ENCODE measurements at regions of chrX and their contacts with region 1.

Region 1: DNA sequence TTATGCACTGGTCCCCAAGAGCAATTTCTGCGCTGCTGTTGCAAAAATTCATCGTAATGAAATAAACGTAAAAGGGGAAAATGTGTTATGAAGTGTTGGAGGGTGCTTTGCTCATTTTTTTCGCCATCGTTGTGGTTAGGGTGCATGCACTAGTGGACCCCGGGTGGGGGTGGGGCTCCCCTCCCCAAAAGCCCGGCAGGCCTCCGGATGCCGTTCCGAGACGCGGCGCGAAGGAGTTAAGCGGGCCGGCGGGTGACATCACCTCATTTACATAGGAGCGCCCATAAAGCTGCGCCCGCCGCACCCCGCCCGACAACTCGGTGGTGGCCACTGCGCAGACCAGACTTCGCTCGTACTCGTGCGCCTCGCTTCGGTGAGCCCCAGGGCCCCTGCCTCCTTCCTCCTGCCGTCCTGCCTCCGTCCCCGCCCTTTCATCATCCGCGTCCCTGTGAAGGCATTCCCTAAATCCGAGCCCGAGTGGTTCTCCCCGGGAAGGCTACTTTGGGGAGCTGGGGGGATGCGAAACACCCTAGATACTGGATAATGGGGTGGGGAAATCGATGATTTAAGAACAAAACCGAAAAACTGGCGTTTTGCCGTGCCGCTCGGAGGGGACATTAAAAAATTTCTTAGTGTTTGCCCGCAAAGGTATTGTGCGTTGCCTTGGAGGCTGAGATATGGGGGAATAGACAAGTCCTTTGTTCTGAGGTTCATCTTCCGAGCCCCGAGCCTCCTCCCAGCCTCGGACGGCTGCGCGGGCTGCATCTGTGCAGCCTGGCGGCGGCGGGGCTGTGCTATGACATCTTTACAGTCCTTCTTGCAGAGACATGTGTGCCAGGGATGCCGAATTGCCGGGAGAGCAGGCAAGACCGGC is at the start of gene TMSB4X:
- DNase-seq: peak; percentile 87
- ATAC-seq: peak; percentile 48
- H3K4me3 Mint-ChIP-seq: peak within 1 kb of the TSS; percentile 91
- H3K27ac Mint-ChIP-seq: peak within 1 kb of the TSS; percentile 95
- H3K4me1 Mint-ChIP-seq: peaks cover 15% of the 10 kb centered on the region
- H3K27me3 Mint-ChIP-seq: no peaks in the 10 kb centered on the region
- CTCF ChIP-seq: no peak
- total RNA-seq, gene TMSB4X: 5,169 to 5,393 TPM

Region 2: DNA sequence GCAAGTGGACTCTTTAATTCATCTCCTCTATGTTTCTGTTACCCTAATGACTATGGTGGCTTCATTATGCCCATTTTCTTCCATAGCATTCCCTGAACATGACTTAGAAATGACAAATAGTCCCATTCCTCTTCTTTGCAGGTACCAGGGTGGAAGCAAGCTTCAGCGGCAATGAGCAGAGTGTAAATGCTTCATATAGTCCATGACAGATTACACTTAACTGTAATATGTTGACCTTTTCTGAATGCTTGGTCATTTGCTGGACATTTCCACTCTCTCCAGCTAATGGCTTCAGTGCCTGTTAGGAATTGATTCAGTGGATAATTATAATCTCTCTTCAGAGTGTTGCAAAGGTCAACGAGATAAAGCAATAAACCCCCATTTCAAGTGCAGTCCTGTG is 313.6 kb before region 1 on chrX:
- CTCF ChIA-PET with region 1: no interaction called
- POLR2A ChIA-PET with region 1: no interaction called
- intact Hi-C with region 1: no loop called
- DNase-seq: no peak
- ATAC-seq: no peak
- H3K4me3 Mint-ChIP-seq: no peak overlapping the region
- H3K27ac Mint-ChIP-seq: no peak overlapping the region
- H3K4me1 Mint-ChIP-seq: no peaks in the 10 kb centered on the region
- H3K27me3 Mint-ChIP-seq: no peaks in the 10 kb centered on the region
- CTCF ChIP-seq: no peak

Region 3: GRCh38 chrX:12843668-12844279 is 131.3 kb before region 1 on chrX:
- CTCF ChIA-PET with region 1: no interaction called
- POLR2A ChIA-PET with region 1: no interaction called
- intact Hi-C with region 1: no loop called
- DNase-seq: no peak
- ATAC-seq: peak; percentile 69
- H3K4me3 Mint-ChIP-seq: peak overlapping the region; percentile 51
- H3K27ac Mint-ChIP-seq: peak overlapping the region; percentile 85
- H3K4me1 Mint-ChIP-seq: peaks cover 15% of the 10 kb centered on the region
- H3K27me3 Mint-ChIP-seq: no peaks in the 10 kb centered on the region
- CTCF ChIP-seq: no peak

Region 4: GRCh38 chrX:12955882-12956703 is 18.9 kb before region 1 on chrX:
- CTCF ChIA-PET with region 1: interaction called, 150 read pairs
- POLR2A ChIA-PET with region 1: interaction called, 621 read pairs
- intact Hi-C with region 1: loop called (anchors 1 kb)
- DNase-seq: peak; percentile 83
- ATAC-seq: peak; percentile 45
- H3K4me3 Mint-ChIP-seq: peak overlapping the region; percentile 88
- H3K27ac Mint-ChIP-seq: peak overlapping the region; percentile 98
- H3K4me1 Mint-ChIP-seq: peaks cover 53% of the 10 kb centered on the region
- H3K27me3 Mint-ChIP-seq: no peaks in the 10 kb centered on the region
- CTCF ChIP-seq: no peak

Region 5: DNA sequence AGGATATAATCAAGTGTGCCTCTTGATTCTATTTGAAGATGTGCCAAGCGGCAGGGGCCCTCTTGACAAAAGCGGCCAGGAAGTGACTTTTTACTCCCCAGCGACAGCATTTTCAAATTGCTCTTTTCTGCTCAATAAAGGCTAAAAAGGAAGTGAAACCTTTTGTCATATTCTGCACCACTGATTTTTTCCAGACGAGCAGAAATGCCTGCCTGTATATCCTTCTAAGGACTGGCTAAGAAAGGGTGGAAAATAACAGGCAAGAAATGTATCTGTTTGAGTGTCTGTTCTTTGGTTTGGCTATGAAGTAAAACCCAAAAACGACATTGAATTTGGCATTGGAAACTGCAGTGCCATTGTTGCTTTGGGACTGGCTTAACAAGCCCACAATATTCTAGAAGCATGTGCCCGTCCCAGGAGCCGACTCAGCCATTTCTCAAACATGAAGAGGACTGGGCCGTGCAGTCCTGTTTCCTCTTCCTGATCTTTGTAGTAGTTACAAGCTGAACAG is 25.3 kb after region 1 on chrX:
- CTCF ChIA-PET with region 1: interaction called, 4 read pairs
- POLR2A ChIA-PET with region 1: interaction called, 127 read pairs
- intact Hi-C with region 1: no loop called
- DNase-seq: peak; percentile 67
- ATAC-seq: peak; percentile 46
- H3K4me3 Mint-ChIP-seq: peak overlapping the region; percentile 74
- H3K27ac Mint-ChIP-seq: peak overlapping the region; percentile 96
- H3K4me1 Mint-ChIP-seq: peaks cover 65% of the 10 kb centered on the region
- H3K27me3 Mint-ChIP-seq: no peaks in the 10 kb centered on the region
- CTCF ChIP-seq: no peak

Region 6: GRCh38 chrX:13005661-13006473 is 30.8 kb after region 1 on chrX:
- CTCF ChIA-PET with region 1: interaction called, 4 read pairs
- POLR2A ChIA-PET with region 1: interaction called, 127 read pairs
- intact Hi-C with region 1: no loop called
- DNase-seq: peak; percentile 43
- ATAC-seq: peak; percentile 63
- H3K4me3 Mint-ChIP-seq: peak overlapping the region; percentile 71
- H3K27ac Mint-ChIP-seq: peak overlapping the region; percentile 99
- H3K4me1 Mint-ChIP-seq: peaks cover 67% of the 10 kb centered on the region
- H3K27me3 Mint-ChIP-seq: no peaks in the 10 kb centered on the region
- CTCF ChIP-seq: no peak

Region 7: GRCh38 chrX:13051529-13052172 is 76.6 kb after region 1 on chrX:
- CTCF ChIA-PET with region 1: no interaction called
- POLR2A ChIA-PET with region 1: interaction called, 18 read pairs
- intact Hi-C with region 1: no loop called
- DNase-seq: no peak
- ATAC-seq: peak; percentile 69
- H3K4me3 Mint-ChIP-seq: no peak overlapping the region
- H3K27ac Mint-ChIP-seq: peak overlapping the region; percentile 88
- H3K4me1 Mint-ChIP-seq: peaks cover 73% of the 10 kb centered on the region
- H3K27me3 Mint-ChIP-seq: no peaks in the 10 kb centered on the region
- CTCF ChIP-seq: no peak

Region 8: DNA sequence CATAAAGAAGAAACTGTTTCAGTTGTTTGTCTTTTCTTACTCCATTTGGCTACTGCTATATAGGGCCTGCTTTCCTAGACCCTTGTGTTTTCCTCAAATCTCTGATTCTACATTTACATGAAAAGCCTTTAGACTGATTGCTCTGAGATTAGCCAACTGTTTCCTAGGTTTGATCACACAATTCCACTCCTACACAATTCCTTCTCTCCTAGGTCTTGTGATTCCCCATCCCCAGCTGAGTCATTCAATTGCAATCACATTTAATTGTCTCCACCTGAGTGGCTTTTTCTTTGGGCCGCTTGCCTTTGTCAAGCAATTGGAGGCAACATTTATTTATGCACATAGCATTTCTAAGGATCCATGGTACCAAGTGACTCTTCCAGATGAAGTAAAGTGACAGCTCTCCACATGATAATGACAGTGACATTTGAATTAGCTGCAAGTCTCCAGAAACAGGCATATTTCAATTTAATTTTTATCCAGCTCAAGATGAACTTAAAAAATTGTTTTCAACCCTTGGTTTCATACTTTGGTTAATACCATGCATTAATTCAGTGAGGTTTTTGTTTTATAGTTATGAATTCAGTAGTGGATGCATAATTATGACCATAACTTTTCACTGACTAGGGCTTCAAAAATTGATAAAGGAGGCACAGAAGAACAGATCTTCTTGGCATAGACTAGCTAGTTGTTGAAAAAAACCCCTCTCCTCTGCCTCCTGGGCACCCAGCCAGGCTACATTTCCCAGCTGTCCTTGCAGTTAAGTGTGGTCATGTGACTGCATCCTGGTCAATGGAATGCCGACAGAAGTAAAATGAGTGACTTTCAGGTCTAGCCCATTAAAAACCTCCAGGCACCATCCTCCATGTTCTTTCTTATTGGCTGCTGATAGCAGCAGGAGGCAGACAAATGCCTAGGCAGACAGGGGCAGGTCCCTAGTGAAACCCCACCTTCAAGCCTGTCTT is 309.2 kb after region 1 on chrX:
- CTCF ChIA-PET with region 1: no interaction called
- POLR2A ChIA-PET with region 1: no interaction called
- intact Hi-C with region 1: no loop called
- DNase-seq: no peak
- ATAC-seq: no peak
- H3K4me3 Mint-ChIP-seq: no peak overlapping the region
- H3K27ac Mint-ChIP-seq: no peak overlapping the region
- H3K4me1 Mint-ChIP-seq: peaks cover 3% of the 10 kb centered on the region
- H3K27me3 Mint-ChIP-seq: no peaks in the 10 kb centered on the region
- CTCF ChIP-seq: no peak